ENCODE measurements at regions of chr9 and their contacts with region 1.

Region 1: DNA sequence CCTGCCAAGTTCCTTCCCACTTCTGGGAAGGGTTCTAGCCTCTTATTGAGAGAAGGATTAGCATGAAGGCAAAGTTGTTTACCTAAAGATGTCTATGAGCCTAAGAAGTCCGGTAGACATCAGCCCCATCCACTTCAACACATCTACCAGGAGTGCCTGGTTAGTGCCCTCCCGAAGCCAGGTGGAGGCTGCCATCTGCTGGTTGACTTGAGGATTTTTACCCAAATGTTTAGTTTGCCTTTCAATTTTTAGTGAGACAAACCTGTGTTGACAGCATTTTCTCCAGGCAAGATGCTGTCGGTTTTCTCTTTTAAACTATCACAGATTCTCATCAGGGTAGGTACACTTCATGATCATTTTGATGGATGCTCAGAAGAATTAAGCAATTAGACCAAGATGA is 83.6 kb upstream of the TNFSF8 start:
- H3K4me3 ChIP-seq: no peak overlapping the region
- H3K27ac ChIP-seq: no peak overlapping the region
- H3K4me1 ChIP-seq: peaks cover 3% of the 10 kb centered on the region; the same call in 1 of the 2 replicates
- CTCF ChIP-seq: peak; percentile 61

Region 2: GRCh38 chr9:114662081-114662989 is 351.7 kb before region 1 on chr9:
- CTCF ChIA-PET with region 1: interaction called, 20 read pairs
- POLR2A ChIA-PET with region 1: no interaction called
- H3K4me3 ChIP-seq: no peak overlapping the region
- H3K27ac ChIP-seq: no peak overlapping the region
- H3K4me1 ChIP-seq: no peaks in the 10 kb centered on the region
- CTCF ChIP-seq: 0 out of 2 replicates have a peak, but pooled peaks have one; percentile 23

Region 3: GRCh38 chr9:114914139-114914538 is 99.9 kb before region 1 on chr9:
- CTCF ChIA-PET with region 1: interaction called, 138 read pairs
- POLR2A ChIA-PET with region 1: no interaction called
- H3K4me3 ChIP-seq: no peak overlapping the region
- H3K27ac ChIP-seq: no peak overlapping the region
- H3K4me1 ChIP-seq: no peaks in the 10 kb centered on the region
- CTCF ChIP-seq: no peak

Region 4: GRCh38 chr9:114958021-114958843 is 55.8 kb before region 1 on chr9:
- CTCF ChIA-PET with region 1: no interaction called
- POLR2A ChIA-PET with region 1: no interaction called
- H3K4me3 ChIP-seq: no peak overlapping the region
- H3K27ac ChIP-seq: no peak overlapping the region
- H3K4me1 ChIP-seq: no peaks in the 10 kb centered on the region
- CTCF ChIP-seq: no peak

Region 5: DNA sequence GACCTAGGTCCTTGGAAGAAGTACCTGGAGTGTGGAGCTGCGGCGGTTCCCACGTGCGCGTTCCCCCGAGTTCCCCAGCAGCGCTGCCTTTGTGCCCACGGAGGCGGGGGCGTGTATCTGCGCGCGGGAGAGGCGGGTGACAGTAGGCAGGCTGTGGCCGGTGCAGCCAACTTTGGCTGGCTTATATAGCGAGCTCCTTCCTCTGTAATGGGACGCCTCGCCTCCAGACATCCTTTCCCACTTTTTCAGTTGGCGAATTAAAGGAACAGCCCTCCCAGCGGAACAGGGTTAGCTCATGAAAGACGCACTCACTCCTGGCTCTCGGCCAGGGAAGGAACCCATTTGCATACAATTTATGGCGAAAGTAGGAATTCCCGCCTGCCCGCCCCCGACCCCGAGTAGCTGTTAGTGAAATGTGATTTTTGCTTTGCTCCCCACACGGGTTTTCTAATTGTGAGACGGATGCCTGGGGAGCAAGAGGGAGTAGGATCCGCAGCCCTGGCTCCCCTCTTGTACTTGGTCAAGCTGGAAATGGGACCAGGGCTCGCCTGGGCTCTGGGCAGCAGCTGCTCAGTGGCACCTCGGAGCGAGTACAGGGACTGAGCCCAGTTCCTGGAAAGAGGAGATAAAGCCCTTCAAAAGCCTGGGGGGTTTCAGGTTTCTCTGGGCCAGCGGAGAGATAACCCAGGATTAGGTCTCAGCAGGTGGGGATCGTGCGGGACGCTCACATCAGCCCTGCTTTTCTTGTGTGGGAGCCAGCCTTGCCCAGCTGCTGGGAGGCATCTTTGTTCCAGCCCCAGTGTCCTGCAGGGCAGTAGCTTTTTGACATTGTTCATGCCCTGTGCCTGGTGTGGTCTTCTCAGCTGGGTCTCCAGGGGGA is 104.2 kb after region 1 on chr9 and contains the start of gene TNC:
- CTCF ChIA-PET with region 1: interaction called, 13 read pairs
- POLR2A ChIA-PET with region 1: no interaction called
- H3K4me3 ChIP-seq: peak within 1 kb of the TSS; percentile 51
- H3K27ac ChIP-seq: peak within 1 kb of the TSS; percentile 93
- H3K4me1 ChIP-seq: peaks cover 8% of the 10 kb centered on the region
- CTCF ChIP-seq: no peak